ENCODE measurements at regions of chr2 and their contacts with region 1.

Region 1: GRCh38 chr2:174487108-174487819 is 435 bp upstream of the GPR155 start:
- DNase-seq: peak; percentile 96
- H3K4me3 Mint-ChIP-seq: peak overlapping the region; percentile 95
- H3K27ac Mint-ChIP-seq: peak overlapping the region; percentile 85
- H3K4me1 Mint-ChIP-seq: peaks cover 51% of the 10 kb centered on the region
- H3K27me3 Mint-ChIP-seq: no peaks in the 10 kb centered on the region

Region 2: GRCh38 chr2:174248187-174248997 is 238.9 kb before region 1 on chr2 and contains the start of gene OLA1:
- intact Hi-C with region 1: loop called (anchors 2 kb)
- DNase-seq: peak; percentile 99
- H3K4me3 Mint-ChIP-seq: peak within 1 kb of the TSS; percentile 88
- H3K27ac Mint-ChIP-seq: peak within 1 kb of the TSS; percentile 90
- H3K4me1 Mint-ChIP-seq: peaks cover 25% of the 10 kb centered on the region
- H3K27me3 Mint-ChIP-seq: peaks cover 2% of the 10 kb centered on the region
- total RNA-seq, gene OLA1: 164 and 167 TPM in 2 replicates

Region 3: GRCh38 chr2:174593574-174594203 is 106.4 kb after region 1 on chr2:
- intact Hi-C with region 1: loop called (anchors 2 kb)
- DNase-seq: peak; percentile 92
- H3K4me3 Mint-ChIP-seq: peak overlapping the region; percentile 86
- H3K27ac Mint-ChIP-seq: peak overlapping the region; percentile 98
- H3K4me1 Mint-ChIP-seq: peaks cover 53% of the 10 kb centered on the region
- H3K27me3 Mint-ChIP-seq: no peaks in the 10 kb centered on the region

Region 4: DNA sequence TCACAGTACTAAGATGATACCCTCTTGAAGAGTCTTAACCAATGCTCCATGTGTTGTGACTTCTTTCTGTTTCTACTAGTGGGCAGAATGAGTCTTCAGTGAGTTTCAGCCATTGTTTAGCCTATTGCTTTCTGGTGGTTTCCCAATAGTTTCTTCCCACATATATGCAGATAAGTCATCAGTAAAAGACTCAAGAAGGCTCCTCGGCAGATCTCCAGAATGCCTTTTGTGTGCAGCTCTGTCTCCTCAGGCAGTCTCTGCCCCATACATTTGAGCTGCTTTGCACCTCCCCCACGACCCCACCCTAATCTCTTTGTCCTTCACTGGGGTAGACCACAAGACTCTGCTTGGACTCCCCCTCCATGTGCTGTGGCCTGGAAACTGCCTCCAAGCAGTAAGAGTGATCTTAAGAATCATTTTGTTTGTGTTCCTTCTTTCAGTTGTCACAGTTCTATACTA is 348.6 kb after region 1 on chr2:
- intact Hi-C with region 1: loop called (anchors 5 kb)
- DNase-seq: peak; percentile 60
- H3K4me3 Mint-ChIP-seq: peak overlapping the region; percentile 72
- H3K27ac Mint-ChIP-seq: peak overlapping the region; percentile 99
- H3K4me1 Mint-ChIP-seq: peaks cover 30% of the 10 kb centered on the region
- H3K27me3 Mint-ChIP-seq: no peaks in the 10 kb centered on the region

Region 5: DNA sequence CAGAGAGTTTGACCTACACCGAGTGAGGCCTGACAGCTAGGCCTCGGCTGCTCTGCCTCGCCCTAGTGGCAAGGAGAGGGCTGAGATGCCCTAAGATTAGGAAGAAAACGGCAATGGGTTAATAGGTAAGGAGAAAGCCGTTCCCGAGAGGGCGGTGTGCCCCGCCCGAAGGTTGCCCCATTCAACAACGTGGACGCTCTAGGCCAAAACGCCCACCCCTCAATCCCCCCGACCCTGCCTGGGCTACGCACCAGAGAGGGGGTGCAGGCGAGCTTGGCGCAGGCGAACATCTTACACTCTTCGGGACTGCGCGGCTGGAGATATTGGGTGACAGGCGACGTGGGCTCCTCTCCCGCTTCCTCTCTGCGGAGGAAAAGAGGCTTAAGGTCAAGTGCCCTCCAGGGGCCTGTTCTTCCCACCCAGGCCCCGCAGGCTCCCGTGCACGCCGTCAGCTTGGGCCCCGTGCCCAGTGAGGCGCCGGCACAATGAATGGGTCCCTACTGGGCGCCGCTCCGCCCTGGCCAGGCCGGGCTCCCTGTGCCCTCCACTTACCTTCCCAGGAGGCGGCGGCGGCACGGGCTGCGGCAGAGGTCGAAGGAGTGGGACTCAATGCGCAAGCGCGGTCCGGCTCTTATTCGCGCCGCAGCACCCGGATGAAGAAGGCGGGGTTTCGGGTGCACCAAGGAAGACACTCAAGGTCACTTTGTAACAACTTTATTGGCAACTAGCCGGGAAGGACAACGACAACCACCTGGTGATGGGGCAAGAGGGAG is 694.0 kb after region 1 on chr2 and contains the start of gene ATP5MC3:
- intact Hi-C with region 1: loop called (anchors 2 kb)
- DNase-seq: peak; percentile 97
- H3K4me3 Mint-ChIP-seq: peak within 1 kb of the TSS; percentile 88
- H3K27ac Mint-ChIP-seq: peak within 1 kb of the TSS; percentile 94
- H3K4me1 Mint-ChIP-seq: peaks cover 20% of the 10 kb centered on the region
- H3K27me3 Mint-ChIP-seq: no peaks in the 10 kb centered on the region
- total RNA-seq, gene ATP5MC3: 405 and 414 TPM in 2 replicates